ENCODE measurements at regions of chr19 and their contacts with region 1.

Region 1: GRCh38 chr19:47231215-47231984 is 401 bp upstream of the BBC3 start:
- DNase-seq: peak; percentile 86
- ATAC-seq: peak; percentile 63
- H3K4me3 Mint-ChIP-seq: peak overlapping the region; percentile 67
- H3K27ac Mint-ChIP-seq: peak overlapping the region; percentile 71
- H3K4me1 Mint-ChIP-seq: peaks cover 30% of the 10 kb centered on the region
- H3K27me3 Mint-ChIP-seq: no peaks in the 10 kb centered on the region
- CTCF ChIP-seq: no peak

Region 2: DNA sequence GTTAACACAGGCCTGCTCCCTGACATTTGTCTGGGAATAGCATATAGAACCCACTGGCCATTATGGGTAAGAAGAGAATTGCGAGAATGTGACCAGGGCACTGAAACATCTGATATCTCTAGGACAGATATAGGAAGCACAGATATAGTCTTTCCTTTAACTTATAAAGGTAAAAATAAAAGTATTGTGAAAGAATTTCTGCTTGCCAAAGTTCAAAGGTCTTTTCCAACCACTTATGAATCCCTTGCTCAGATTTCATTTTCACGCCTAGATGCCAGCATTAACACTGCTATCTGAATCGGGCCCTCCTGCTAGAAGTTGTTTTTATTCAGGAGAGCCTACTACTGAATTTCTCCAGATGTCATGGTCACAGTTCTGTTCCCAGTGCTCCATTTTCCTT is 28.1 kb before region 1 on chr19:
- CTCF ChIA-PET with region 1: interaction called, 3 read pairs
- POLR2A ChIA-PET with region 1: interaction called, 13 read pairs
- intact Hi-C with region 1: no loop called
- DNase-seq: no peak
- ATAC-seq: no peak
- H3K4me3 Mint-ChIP-seq: no peak overlapping the region
- H3K27ac Mint-ChIP-seq: no peak overlapping the region
- H3K4me1 Mint-ChIP-seq: peaks cover 3% of the 10 kb centered on the region
- H3K27me3 Mint-ChIP-seq: no peaks in the 10 kb centered on the region
- CTCF ChIP-seq: no peak

Region 3: DNA sequence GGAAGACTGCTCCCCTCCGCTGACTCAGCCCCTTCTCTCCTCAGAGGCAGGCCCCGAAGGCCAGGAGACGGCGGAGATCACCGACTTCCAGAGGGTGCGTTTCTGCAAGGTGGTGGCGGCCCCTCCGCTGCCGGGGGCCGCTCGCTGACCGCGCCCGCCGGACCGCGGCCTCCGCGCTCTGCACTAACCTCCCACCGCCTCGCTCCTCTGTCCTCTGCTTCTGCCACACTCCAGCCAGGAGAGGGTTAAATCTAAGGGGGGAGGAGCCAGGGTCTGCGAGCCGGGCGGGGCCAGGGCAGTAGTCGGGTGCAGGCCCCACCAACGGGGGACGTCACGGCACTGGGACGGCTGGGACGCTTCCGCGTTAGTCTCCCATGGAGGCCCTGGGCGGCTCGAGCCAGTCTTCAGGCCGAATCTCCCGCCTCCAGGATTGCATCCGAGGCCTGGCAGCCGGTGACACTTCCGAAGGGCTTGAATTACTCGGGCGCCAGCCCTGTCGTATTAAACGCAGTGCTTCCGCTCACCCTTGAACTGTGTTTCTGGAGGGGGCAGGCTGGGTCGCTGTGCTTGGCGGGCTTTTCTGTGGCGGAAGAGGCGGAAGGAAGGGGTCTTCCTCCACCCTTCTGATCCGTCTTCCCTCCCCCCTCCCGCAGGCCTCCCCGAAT is 42.0 kb after region 1 on chr19:
- CTCF ChIA-PET with region 1: no interaction called
- POLR2A ChIA-PET with region 1: interaction called, 42 read pairs
- intact Hi-C with region 1: loop called (anchors 1 kb)
- DNase-seq: peak; percentile 83
- ATAC-seq: peak; percentile 54
- H3K4me3 Mint-ChIP-seq: peak overlapping the region; percentile 96
- H3K27ac Mint-ChIP-seq: peak overlapping the region; percentile 97
- H3K4me1 Mint-ChIP-seq: peaks cover 27% of the 10 kb centered on the region
- H3K27me3 Mint-ChIP-seq: no peaks in the 10 kb centered on the region
- CTCF ChIP-seq: no peak

Measured in activated B cell treated with CpG ODN at 0.5 μM for 24 hours (primary cell).